B cell (primary cell): ENCODE measurements at regions of chr10 and their contacts with region 1.

Region 1: GRCh38 chr10:71893920-71894319 is 42.9 kb upstream of the PSAP start:
- DNase-seq: no peak
- ATAC-seq: no peak
- H3K4me3 ChIP-seq: no peak overlapping the region
- H3K4me3 Mint-ChIP-seq: no peak overlapping the region
- H3K27ac ChIP-seq: no peak overlapping the region
- H3K27ac Mint-ChIP-seq: no peak overlapping the region
- H3K4me1 ChIP-seq: peaks cover 16 to 17% of the 10 kb centered on the region in 2 donors
- H3K4me1 Mint-ChIP-seq: peaks cover 20% of the 10 kb centered on the region
- H3K27me3 ChIP-seq: no peaks in the 10 kb centered on the region
- H3K27me3 Mint-ChIP-seq: no peaks in the 10 kb centered on the region
- CTCF ChIP-seq: no peak

Region 2: DNA sequence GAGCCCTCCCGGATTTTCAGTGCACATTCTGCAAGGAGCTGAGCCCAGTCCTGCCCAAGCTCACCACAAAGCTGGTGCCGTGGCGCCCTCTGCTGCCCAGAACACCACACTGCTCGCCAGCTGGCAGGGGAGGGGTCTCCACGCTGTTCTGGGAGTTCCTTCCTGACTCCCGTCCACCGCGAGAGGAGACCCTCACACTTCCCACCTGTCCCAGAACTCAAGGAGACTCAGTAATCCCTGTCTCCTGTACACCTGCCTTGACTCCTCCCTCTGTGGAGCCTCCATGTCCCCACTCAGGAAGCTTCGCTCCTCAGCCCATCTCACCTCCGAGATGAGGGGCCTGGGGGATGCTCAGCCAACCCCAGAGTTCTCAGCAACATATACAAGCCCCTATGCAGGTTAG is 185.6 kb before region 1 on chr10:
- CTCF ChIA-PET with region 1: interaction called, 22 read pairs
- POLR2A ChIA-PET with region 1: no interaction called
- intact Hi-C with region 1: no loop called
- DNase-seq: peak; percentile 74
- ATAC-seq: peak; percentile 77
- H3K4me3 ChIP-seq: no peak overlapping the region
- H3K4me3 Mint-ChIP-seq: no peak overlapping the region
- H3K27ac ChIP-seq: no peak overlapping the region
- H3K27ac Mint-ChIP-seq: no peak overlapping the region
- H3K4me1 ChIP-seq: peaks cover 16 to 22% of the 10 kb centered on the region in 2 donors
- H3K4me1 Mint-ChIP-seq: peaks cover 29% of the 10 kb centered on the region
- H3K27me3 ChIP-seq: no peaks in the 10 kb centered on the region
- H3K27me3 Mint-ChIP-seq: no peaks in the 10 kb centered on the region
- CTCF ChIP-seq: peak; percentile 89

Region 3: GRCh38 chr10:71812016-71812912 is 81.7 kb before region 1 on chr10:
- CTCF ChIA-PET with region 1: interaction called, 106 read pairs
- POLR2A ChIA-PET with region 1: interaction called, 7 read pairs
- intact Hi-C with region 1: loop called (anchors 1 kb)
- DNase-seq: peak; percentile 85
- ATAC-seq: peak; percentile 93
- H3K4me3 ChIP-seq: no peak overlapping the region
- H3K4me3 Mint-ChIP-seq: no peak overlapping the region
- H3K27ac ChIP-seq: no peak overlapping the region
- H3K27ac Mint-ChIP-seq: no peak overlapping the region
- H3K4me1 ChIP-seq: peaks cover 5 to 11% of the 10 kb centered on the region in 2 donors
- H3K4me1 Mint-ChIP-seq: peaks cover 6% of the 10 kb centered on the region
- H3K27me3 ChIP-seq: no peaks in the 10 kb centered on the region
- H3K27me3 Mint-ChIP-seq: peaks cover 4% of the 10 kb centered on the region
- CTCF ChIP-seq: peak; percentile 84

Region 4: DNA sequence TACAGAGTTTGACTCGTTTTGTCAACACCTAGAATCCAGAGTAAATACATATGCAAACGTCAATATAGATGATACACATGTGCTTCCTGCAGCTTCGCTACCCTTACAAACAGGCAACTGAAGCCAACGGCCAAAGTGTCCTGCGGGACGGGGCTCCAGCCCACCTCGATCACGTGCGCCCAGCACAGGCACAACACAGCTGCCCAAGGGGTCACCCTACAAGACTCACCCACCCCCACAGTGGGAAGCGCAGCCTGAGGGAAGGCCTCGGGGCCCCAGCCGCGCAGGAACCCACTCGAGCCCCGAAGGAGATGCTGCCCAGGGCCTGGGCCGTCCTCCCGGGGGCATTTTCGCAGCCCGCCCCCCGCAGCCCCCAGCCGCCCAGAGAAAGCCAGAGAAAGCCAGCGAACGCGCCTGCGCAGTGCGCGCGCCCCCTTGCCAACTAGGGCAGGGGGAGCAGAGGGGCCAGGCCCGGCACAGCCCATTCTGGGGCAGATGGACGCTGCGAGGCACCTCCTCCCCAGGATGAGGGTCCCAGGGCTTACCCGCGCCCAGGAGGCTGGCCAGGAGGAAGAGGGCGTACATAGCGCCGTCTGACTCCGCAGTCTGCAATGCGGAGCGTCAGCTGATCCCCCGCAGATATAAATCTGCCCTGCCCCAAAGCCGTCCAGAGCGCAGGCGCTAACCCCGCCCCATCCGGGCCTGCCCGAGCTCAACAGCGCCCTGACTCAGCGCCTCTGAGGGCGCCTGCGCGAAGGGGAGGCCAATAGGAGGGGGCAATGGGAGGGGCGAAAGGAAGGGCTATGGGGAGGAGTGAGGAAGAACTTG is 43.1 kb before region 1 on chr10 and contains the start of gene PSAP:
- CTCF ChIA-PET with region 1: interaction called, 22 read pairs
- POLR2A ChIA-PET with region 1: interaction called, 8 read pairs
- intact Hi-C with region 1: loop called (anchors 1 kb)
- DNase-seq: peak; percentile 96
- ATAC-seq: peak; percentile 97
- H3K4me3 ChIP-seq: peak within 1 kb of the TSS; percentile 72 to 95 (median 91)
- H3K4me3 Mint-ChIP-seq: peak within 1 kb of the TSS; percentile 99
- H3K27ac ChIP-seq: peak within 1 kb of the TSS; percentile 65 to 91
- H3K27ac Mint-ChIP-seq: peak within 1 kb of the TSS; percentile 94
- H3K4me1 ChIP-seq: peaks cover 35 to 51% of the 10 kb centered on the region in 2 donors
- H3K4me1 Mint-ChIP-seq: peaks cover 57% of the 10 kb centered on the region
- H3K27me3 ChIP-seq: no peaks in the 10 kb centered on the region
- H3K27me3 Mint-ChIP-seq: no peaks in the 10 kb centered on the region
- CTCF ChIP-seq: no peak
- total RNA-seq, gene PSAP: 509 and 536 TPM in 2 replicates

Region 5: GRCh38 chr10:72048450-72049124 is 154.7 kb after region 1 on chr10:
- CTCF ChIA-PET with region 1: interaction called, 26 read pairs
- POLR2A ChIA-PET with region 1: no interaction called
- intact Hi-C with region 1: loop called (anchors 1 kb)
- DNase-seq: peak; percentile 91
- ATAC-seq: peak; percentile 98
- H3K4me3 ChIP-seq: no peak overlapping the region
- H3K4me3 Mint-ChIP-seq: no peak overlapping the region
- H3K27ac ChIP-seq: no peak overlapping the region
- H3K27ac Mint-ChIP-seq: no peak overlapping the region
- H3K4me1 ChIP-seq: no peaks in the 10 kb centered on the region
- H3K4me1 Mint-ChIP-seq: no peaks in the 10 kb centered on the region
- H3K27me3 ChIP-seq: no peaks in the 10 kb centered on the region
- H3K27me3 Mint-ChIP-seq: no peaks in the 10 kb centered on the region
- CTCF ChIP-seq: peak; percentile 99

Region 6: GRCh38 chr10:72593963-72594362 is 700.0 kb after region 1 on chr10:
- CTCF ChIA-PET with region 1: no interaction called
- POLR2A ChIA-PET with region 1: no interaction called
- intact Hi-C with region 1: no loop called
- DNase-seq: no peak
- ATAC-seq: no peak
- H3K4me3 ChIP-seq: no peak overlapping the region
- H3K4me3 Mint-ChIP-seq: no peak overlapping the region
- H3K27ac ChIP-seq: no peak overlapping the region
- H3K27ac Mint-ChIP-seq: no peak overlapping the region
- H3K4me1 ChIP-seq: peaks cover 0 to 6% of the 10 kb centered on the region in 2 donors
- H3K4me1 Mint-ChIP-seq: peaks cover 28% of the 10 kb centered on the region
- H3K27me3 ChIP-seq: no peaks in the 10 kb centered on the region
- H3K27me3 Mint-ChIP-seq: no peaks in the 10 kb centered on the region
- CTCF ChIP-seq: no peak